ENCODE measurements at regions of chr11 and their contacts with region 1.

Region 1: DNA sequence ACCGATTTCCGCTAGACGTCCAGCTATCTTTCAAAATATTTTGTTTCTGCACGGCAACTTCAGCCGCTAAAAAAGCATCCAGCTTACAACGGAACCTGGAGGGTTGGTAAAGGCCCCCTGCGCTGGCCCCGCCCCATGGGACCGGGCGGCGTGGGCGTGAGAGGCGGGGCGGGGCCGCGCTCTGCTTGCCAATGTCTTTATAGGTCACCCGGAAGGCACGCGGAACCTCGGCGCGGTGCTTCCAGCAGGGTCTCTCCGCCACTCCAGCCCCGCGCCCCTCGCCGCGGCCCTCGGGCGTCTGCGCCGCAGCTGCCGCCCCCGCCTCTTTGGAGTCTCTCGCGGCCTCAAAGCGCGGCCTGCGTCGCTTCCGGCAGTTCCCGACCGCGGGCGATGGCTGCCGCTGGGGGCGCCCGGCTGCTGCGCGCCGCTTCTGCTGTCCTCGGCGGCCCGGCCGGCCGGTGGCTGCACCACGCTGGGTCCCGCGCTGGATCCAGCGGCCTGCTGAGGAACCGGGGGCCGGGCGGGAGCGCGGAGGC is at the start of gene FDX1:
- DNase-seq: peak; percentile 59 to 92 (median 74)
- ATAC-seq: peak; percentile 80
- H3K4me3 ChIP-seq: peak within 1 kb of the TSS; percentile 95
- H3K4me3 Mint-ChIP-seq: peak within 1 kb of the TSS; percentile 89
- H3K27ac ChIP-seq: peak within 1 kb of the TSS; percentile 73 to 84
- H3K27ac Mint-ChIP-seq: peak within 1 kb of the TSS; percentile 94
- H3K4me1 ChIP-seq: peaks cover 26% of the 10 kb centered on the region
- H3K4me1 Mint-ChIP-seq: peaks cover 50% of the 10 kb centered on the region
- H3K27me3 ChIP-seq: no peaks in the 10 kb centered on the region
- H3K27me3 Mint-ChIP-seq: no peaks in the 10 kb centered on the region
- CTCF ChIP-seq: peak; percentile 32
- total RNA-seq, gene FDX1: 10.2 to 10.6 TPM

Region 2: GRCh38 chr11:109946322-109946846 is 483.4 kb before region 1 on chr11:
- CTCF ChIA-PET with region 1: no interaction called
- POLR2A ChIA-PET with region 1: no interaction called
- intact Hi-C with region 1: loop called in 1 of 2 experiments (anchors 5 kb)
- DNase-seq: peak in 10 of 14 experiments; percentile 5 to 70 (median 29)
- ATAC-seq: peak; percentile 76
- H3K4me3 ChIP-seq: no peak overlapping the region
- H3K4me3 Mint-ChIP-seq: peak overlapping the region; percentile 20
- H3K27ac ChIP-seq: no peak overlapping the region
- H3K27ac Mint-ChIP-seq: no peak overlapping the region
- H3K4me1 ChIP-seq: peaks cover 2% of the 10 kb centered on the region
- H3K4me1 Mint-ChIP-seq: peaks cover 6% of the 10 kb centered on the region
- H3K27me3 ChIP-seq: no peaks in the 10 kb centered on the region
- H3K27me3 Mint-ChIP-seq: peaks cover 3% of the 10 kb centered on the region
- CTCF ChIP-seq: peak; percentile 62

Region 3: GRCh38 chr11:110296226-110297075 is 133.3 kb before region 1 on chr11 and contains the start of gene RDX:
- CTCF ChIA-PET with region 1: interaction called, 4 read pairs
- POLR2A ChIA-PET with region 1: interaction called, 9 read pairs
- intact Hi-C with region 1: loop called (anchors 2 to 10 kb)
- DNase-seq: peak; percentile 9 to 86 (median 44)
- ATAC-seq: peak; percentile 65
- H3K4me3 ChIP-seq: peak within 1 kb of the TSS; percentile 79
- H3K4me3 Mint-ChIP-seq: peak within 1 kb of the TSS; percentile 91
- H3K27ac ChIP-seq: no peak within 1 kb of the TSS
- H3K27ac Mint-ChIP-seq: peak within 1 kb of the TSS; percentile 63
- H3K4me1 ChIP-seq: peaks cover 20% of the 10 kb centered on the region
- H3K4me1 Mint-ChIP-seq: peaks cover 37% of the 10 kb centered on the region
- H3K27me3 ChIP-seq: no peaks in the 10 kb centered on the region
- H3K27me3 Mint-ChIP-seq: no peaks in the 10 kb centered on the region
- CTCF ChIP-seq: no peak
- total RNA-seq, gene RDX: 11.4 to 14.2 TPM

Region 4: DNA sequence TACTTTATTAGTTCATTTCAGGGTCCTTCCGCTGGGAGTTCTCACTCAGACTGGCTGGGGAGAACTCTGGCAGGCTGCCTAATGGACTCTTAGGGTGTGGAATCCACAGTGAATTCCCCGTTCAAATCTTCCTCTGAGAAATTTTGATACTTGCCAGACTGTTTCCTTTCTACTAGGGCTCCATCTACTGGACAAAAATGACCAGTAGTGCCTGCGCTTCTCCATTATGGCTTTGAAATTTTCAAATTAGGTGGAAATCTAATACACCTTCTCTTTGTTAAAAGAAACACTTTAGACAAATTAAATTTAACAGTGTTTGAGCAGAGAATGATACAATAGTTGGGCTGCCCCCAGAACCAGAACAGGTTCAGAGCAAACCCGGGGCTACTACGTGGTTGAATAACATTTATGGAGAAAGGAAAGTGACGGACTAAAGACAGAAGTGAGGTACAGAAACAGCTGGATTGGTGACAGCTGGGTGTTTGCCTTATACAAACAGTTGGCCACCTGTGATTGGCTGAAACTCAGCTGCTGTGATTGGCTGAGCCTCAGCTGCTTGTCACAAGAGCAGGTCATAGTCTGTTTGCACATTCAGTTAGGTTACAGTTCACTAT is 53.0 kb before region 1 on chr11:
- CTCF ChIA-PET with region 1: interaction called, 3 read pairs
- POLR2A ChIA-PET with region 1: interaction called, 4 read pairs
- intact Hi-C with region 1: loop called (anchors 2 kb)
- DNase-seq: peak in 5 of 14 experiments; percentile 3 to 70 (median 54)
- ATAC-seq: peak; percentile 57
- H3K4me3 ChIP-seq: no peak overlapping the region
- H3K4me3 Mint-ChIP-seq: no peak overlapping the region
- H3K27ac ChIP-seq: no peak overlapping the region
- H3K27ac Mint-ChIP-seq: no peak overlapping the region
- H3K4me1 ChIP-seq: no peaks in the 10 kb centered on the region
- H3K4me1 Mint-ChIP-seq: peaks cover 6% of the 10 kb centered on the region
- H3K27me3 ChIP-seq: no peaks in the 10 kb centered on the region
- H3K27me3 Mint-ChIP-seq: no peaks in the 10 kb centered on the region
- CTCF ChIP-seq: peak; percentile 77

Region 5: DNA sequence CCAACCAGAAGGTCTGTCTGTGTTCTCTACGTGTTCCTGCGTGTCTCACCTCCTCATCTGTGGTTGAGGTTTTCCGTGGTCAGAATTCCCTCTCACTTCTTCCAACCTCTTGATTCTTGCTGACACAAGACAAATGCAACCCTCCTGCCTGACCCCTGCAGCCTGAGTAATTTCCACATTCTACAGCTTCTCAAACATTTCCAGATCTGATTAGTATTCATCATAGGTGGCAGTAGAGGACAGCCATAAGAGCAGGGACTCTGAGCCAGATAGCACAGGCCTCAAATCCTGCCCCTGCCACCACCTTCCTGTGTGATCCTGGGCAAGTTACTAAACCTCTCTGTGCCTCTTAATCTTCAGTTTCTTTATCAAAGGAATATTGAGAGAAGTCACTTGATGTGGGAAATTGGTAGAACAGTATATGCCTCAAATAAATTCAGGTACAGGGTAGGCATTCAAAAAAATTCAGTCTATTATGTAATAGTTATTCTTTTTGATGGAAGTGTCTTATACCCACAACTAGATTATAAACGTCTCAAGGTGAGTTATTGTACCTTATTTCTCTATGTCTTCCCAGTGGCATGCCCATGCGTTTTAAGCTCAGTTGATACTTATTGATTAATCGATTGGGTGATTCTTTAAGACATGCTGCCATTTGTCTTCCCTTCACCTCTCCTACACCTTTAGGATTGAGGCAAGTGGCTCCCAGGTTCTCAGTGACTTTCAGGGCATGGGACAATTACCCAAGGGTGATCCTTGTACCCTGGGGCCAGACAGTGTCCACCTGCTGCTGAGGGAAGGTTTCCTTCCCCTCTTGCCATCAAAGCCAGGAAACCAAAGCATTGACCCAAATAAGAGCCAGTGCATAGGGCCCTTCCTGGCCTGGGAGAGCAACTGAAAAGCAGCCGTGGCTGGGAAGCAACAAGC is 929.7 kb after region 1 on chr11:
- CTCF ChIA-PET with region 1: no interaction called
- POLR2A ChIA-PET with region 1: no interaction called
- intact Hi-C with region 1: no loop called
- DNase-seq: peak in 2 of 14 experiments; percentile 13 to 15
- ATAC-seq: no peak
- H3K4me3 ChIP-seq: no peak overlapping the region
- H3K4me3 Mint-ChIP-seq: no peak overlapping the region
- H3K27ac ChIP-seq: no peak overlapping the region
- H3K27ac Mint-ChIP-seq: no peak overlapping the region
- H3K4me1 ChIP-seq: no peaks in the 10 kb centered on the region
- H3K4me1 Mint-ChIP-seq: no peaks in the 10 kb centered on the region
- H3K27me3 ChIP-seq: no peaks in the 10 kb centered on the region
- H3K27me3 Mint-ChIP-seq: no peaks in the 10 kb centered on the region
- CTCF ChIP-seq: no peak

Region 6: GRCh38 chr11:111446404-111447111 is 1016.8 kb after region 1 on chr11:
- CTCF ChIA-PET with region 1: no interaction called
- POLR2A ChIA-PET with region 1: no interaction called
- intact Hi-C with region 1: loop called in 1 of 2 experiments (anchors 5 kb)
- DNase-seq: peak; percentile 45 to 95 (median 70)
- ATAC-seq: peak; percentile 98
- H3K4me3 ChIP-seq: no peak overlapping the region
- H3K4me3 Mint-ChIP-seq: peak overlapping the region; percentile 34
- H3K27ac ChIP-seq: peak overlapping the region in 1 of 2 donors; percentile 12
- H3K27ac Mint-ChIP-seq: peak overlapping the region; percentile 58
- H3K4me1 ChIP-seq: peaks cover 15% of the 10 kb centered on the region
- H3K4me1 Mint-ChIP-seq: peaks cover 14% of the 10 kb centered on the region
- H3K27me3 ChIP-seq: no peaks in the 10 kb centered on the region
- H3K27me3 Mint-ChIP-seq: no peaks in the 10 kb centered on the region
- CTCF ChIP-seq: peak; percentile 64

Measured in CD4-positive, alpha-beta T cell (primary cell).